AG04449 (cell line): ENCODE measurements at regions of chr3 and their contacts with region 1.

Region 1: DNA sequence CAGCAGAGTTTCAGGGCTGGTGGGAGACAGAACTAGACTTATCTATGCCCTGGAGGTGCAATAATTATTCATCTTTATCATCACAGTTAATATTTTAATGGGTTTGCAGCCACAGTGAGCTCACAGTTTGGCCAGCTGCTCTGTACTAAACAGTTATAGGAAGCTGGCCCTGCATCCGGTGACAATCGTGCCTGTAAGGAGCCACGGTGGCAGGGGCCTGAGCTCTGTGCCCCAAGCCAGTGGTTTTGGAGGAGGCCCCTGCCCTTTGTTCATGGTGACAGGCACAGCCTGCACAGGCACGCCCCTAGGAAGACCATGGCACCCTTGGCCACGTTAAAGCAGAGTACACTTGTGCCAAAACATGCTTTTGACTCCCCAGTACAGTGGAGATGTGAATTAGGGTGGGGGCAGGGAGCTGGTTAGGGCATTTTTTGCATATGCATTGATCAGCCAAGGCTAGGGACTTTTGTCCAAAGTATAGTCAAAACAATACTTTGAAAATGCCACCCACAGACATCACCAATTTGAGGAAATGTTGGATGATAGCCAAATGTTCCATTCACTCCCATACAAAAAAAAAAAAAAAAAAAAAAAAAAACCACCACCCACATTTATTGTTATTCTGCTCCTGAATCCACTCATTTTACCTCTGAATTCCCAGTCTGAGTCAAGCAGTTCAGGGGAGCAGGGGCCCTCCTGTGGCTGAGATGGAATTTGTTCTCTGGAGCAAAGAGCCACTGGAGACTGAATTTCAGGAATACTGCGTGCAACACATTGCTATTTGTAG is 3.4 kb upstream of the RFTN1 start:
- DNase-seq: no peak
- H3K4me3 ChIP-seq: no peak overlapping the region
- CTCF ChIP-seq: peak; percentile 80

Region 2: GRCh38 chr3:16264708-16265454 is 252.0 kb before region 1 on chr3 and contains the starts of genes DPH3 and OXNAD1:
- CTCF ChIA-PET with region 1: interaction called, 50 read pairs
- POLR2A ChIA-PET with region 1: interaction called, 3 read pairs
- DNase-seq: peak; percentile 97
- H3K4me3 ChIP-seq: peak within 1 kb of the TSS; percentile 98
- CTCF ChIP-seq: no peak

Region 3: GRCh38 chr3:16280671-16281070 is 236.2 kb before region 1 on chr3:
- CTCF ChIA-PET with region 1: interaction called, 13 read pairs
- POLR2A ChIA-PET with region 1: no interaction called
- DNase-seq: no peak
- H3K4me3 ChIP-seq: no peak overlapping the region
- CTCF ChIP-seq: no peak

Region 4: GRCh38 chr3:16378920-16379319 is 138.0 kb before region 1 on chr3:
- CTCF ChIA-PET with region 1: interaction called, 10 read pairs
- POLR2A ChIA-PET with region 1: no interaction called
- DNase-seq: no peak
- H3K4me3 ChIP-seq: no peak overlapping the region
- CTCF ChIP-seq: no peak

Region 5: DNA sequence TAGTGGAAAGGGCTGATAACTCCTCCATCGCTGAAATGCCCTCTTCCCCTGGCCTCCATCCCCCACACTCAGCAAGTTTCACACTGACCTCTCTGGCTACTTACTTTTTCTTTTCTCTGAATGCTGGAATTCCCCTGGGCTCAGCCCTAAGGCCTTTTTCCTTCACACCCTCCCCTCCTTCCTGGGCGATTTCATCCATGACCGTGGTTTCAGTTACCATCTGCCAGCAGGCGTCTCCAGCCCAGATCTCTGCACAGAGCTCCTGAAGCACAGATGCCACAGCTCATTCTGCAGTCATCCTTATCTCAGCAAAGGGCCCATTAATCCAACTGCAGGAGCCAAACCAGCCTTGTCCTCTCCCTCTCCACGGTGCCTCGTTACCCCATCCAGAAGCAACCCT is 117.4 kb before region 1 on chr3:
- CTCF ChIA-PET with region 1: interaction called, 12 read pairs
- POLR2A ChIA-PET with region 1: no interaction called
- DNase-seq: no peak
- H3K4me3 ChIP-seq: no peak overlapping the region
- CTCF ChIP-seq: peak; percentile 47

Region 6: DNA sequence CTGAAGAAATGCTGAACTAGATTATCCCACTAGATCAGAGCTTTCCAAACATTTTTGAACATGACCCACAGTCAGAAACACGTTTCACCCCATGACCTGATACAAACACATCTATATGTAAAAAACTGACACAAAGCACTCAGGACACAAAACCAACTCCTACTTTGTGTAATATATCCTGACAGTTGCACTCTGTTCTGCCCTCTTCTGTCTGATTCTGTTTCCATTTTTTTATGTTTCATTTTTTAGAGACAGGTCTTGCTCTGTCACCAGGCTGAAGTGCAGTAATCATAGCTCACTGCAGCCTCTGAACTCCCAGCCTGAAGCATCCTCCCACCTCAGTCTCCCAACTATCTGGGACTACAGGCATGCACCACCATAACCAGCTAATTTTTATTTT is 12.4 kb after region 1 on chr3:
- CTCF ChIA-PET with region 1: interaction called, 25 read pairs
- POLR2A ChIA-PET with region 1: no interaction called
- DNase-seq: no peak
- H3K4me3 ChIP-seq: no peak overlapping the region
- CTCF ChIP-seq: no peak

Region 7: GRCh38 chr3:16550676-16551341 is 33.9 kb after region 1 on chr3:
- CTCF ChIA-PET with region 1: interaction called, 13 read pairs
- POLR2A ChIA-PET with region 1: no interaction called
- DNase-seq: peak; percentile 57
- H3K4me3 ChIP-seq: no peak overlapping the region; the same call in 1 of the 2 replicates
- CTCF ChIP-seq: peak; percentile 84